Adrenal gland (tissue), 19 donors: ENCODE measurements at regions of chr18 and their contacts with region 1.

Region 1: GRCh38 chr18:11937874-11938478 is 29.9 kb upstream of the MPPE1 start:
- DNase-seq: peak; percentile 56 to 92 (median 72)
- H3K4me3 ChIP-seq: no peak overlapping the region
- H3K27ac ChIP-seq: no peak overlapping the region
- H3K4me1 ChIP-seq: peaks cover 0 to 3% of the 10 kb centered on the region in 2 donors
- H3K27me3 ChIP-seq: no peaks in the 10 kb centered on the region
- CTCF ChIP-seq: peak; percentile 74 to 88 (median 85)
- POLR2A ChIP-seq: no peak

Region 2: GRCh38 chr18:11995445-11996189 is 57.6 kb after region 1 on chr18:
- intact Hi-C with region 1: loop called (anchors 2 kb)
- DNase-seq: peak; percentile 63 to 87 (median 79)
- H3K4me3 ChIP-seq: no peak overlapping the region
- H3K27ac ChIP-seq: peak overlapping the region in 2 of 5 donors; percentile 16 to 77
- H3K4me1 ChIP-seq: peaks cover 0 to 3% of the 10 kb centered on the region in 2 donors
- H3K27me3 ChIP-seq: no peaks in the 10 kb centered on the region
- CTCF ChIP-seq: peak; percentile 57 to 90 (median 78)
- POLR2A ChIP-seq: no peak

Region 3: GRCh38 chr18:12038639-12039417 is 100.9 kb after region 1 on chr18:
- intact Hi-C with region 1: loop called (anchors 5 to 10 kb)
- DNase-seq: peak; percentile 78 to 92 (median 88)
- H3K4me3 ChIP-seq: peak overlapping the region in 2 of 4 donors; percentile 41 to 58
- H3K27ac ChIP-seq: no peak overlapping the region
- H3K4me1 ChIP-seq: peaks cover 0 to 3% of the 10 kb centered on the region in 2 donors
- H3K27me3 ChIP-seq: no peaks in the 10 kb centered on the region
- CTCF ChIP-seq: peak; percentile 94 to 99 (median 98)
- POLR2A ChIP-seq: peak in 1 of 2 donors; percentile 31

Region 4: DNA sequence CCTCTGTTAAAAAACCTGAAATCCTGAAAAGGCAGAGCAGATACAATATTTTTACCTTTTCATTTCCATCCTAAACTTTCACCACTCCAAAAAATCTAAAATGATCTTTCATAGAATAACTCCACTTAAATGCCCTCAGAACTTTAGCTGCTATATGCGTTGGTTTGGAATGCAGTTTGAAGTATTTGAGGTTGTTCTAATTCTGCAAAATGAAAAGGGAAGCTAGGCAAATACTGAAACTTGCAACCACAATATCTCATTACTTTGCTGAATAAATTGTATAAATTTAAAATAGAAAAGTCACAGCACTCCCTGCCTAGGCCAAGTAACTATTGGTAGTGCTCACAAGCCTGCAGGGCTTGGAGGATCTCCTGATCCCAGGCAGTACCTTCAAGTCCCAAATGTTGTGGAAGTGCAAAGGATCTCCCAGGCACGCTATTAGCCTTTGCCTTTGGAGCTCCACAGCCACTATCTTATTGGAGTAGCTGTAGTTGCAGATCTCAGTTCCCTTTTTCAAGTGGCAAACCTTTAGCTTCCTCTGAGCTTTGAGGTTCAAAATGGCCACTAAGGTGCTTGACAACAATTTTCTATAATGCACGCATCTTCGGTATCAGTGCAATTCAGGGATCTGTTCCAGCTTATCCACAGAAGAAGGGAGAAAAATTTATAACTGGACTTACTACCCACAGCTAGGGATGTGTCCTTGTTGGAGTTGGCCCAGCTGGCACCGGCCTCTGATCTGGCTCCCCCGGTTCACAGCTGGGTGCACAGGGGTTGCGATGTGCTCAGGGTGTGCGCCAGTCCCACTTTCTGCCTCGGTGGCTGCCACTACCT is 112.2 kb after region 1 on chr18:
- intact Hi-C with region 1: loop called in 1 of 2 experiments (anchors 10 kb)
- DNase-seq: peak in 2 of 7 donors; percentile 10 to 43
- H3K4me3 ChIP-seq: no peak overlapping the region
- H3K27ac ChIP-seq: no peak overlapping the region
- H3K4me1 ChIP-seq: no peaks in the 10 kb centered on the region
- H3K27me3 ChIP-seq: no peaks in the 10 kb centered on the region
- CTCF ChIP-seq: no peak
- POLR2A ChIP-seq: no peak